ENCODE measurements at regions of chr3 and their contacts with region 1.

Region 1: GRCh38 chr3:128226795-128227395 is 73.6 kb downstream of the EEFSEC start:
- DNase-seq: no peak
- ATAC-seq: peak; percentile 58 to 78 (median 66)
- H3K4me3 ChIP-seq: no peak overlapping the region
- H3K27ac ChIP-seq: no peak overlapping the region
- H3K4me1 ChIP-seq: peaks cover 0 to 23% (median 8%) of the 10 kb centered on the region in 12 donors
- H3K27me3 ChIP-seq: no peaks in the 10 kb centered on the region
- CTCF ChIP-seq: peak; percentile 44 to 78 (median 64)
- POLR2A ChIP-seq: no peak

Region 2: GRCh38 chr3:128322066-128323022 is 95.4 kb after region 1 on chr3:
- intact Hi-C with region 1: loop called in 4 of 10 experiments (anchors 5 kb)
- DNase-seq: peak; percentile 41 to 80 (median 49)
- ATAC-seq: peak; percentile 45 to 72 (median 56)
- H3K4me3 ChIP-seq: no peak overlapping the region
- H3K27ac ChIP-seq: no peak overlapping the region
- H3K4me1 ChIP-seq: peaks cover 0 to 14% (median 0%) of the 10 kb centered on the region in 12 donors
- H3K27me3 ChIP-seq: no peaks in the 10 kb centered on the region
- CTCF ChIP-seq: peak; percentile 34 to 72 (median 56)
- POLR2A ChIP-seq: no peak